Naive thymus-derived CD4-positive, alpha-beta T cell (primary cell): ENCODE measurements at regions of chr2 and their contacts with region 1.

Region 1: GRCh38 chr2:160306985-160307384 is 106.9 kb upstream of the ITGB6 start:
- DNase-seq: no peak
- ATAC-seq: no peak
- H3K4me3 ChIP-seq: no peak overlapping the region
- H3K4me3 Mint-ChIP-seq: no peak overlapping the region
- H3K27ac ChIP-seq: no peak overlapping the region
- H3K27ac Mint-ChIP-seq: no peak overlapping the region
- H3K4me1 ChIP-seq: no peaks in the 10 kb centered on the region
- H3K4me1 Mint-ChIP-seq: peaks cover 0 to 56% (median 24%) of the 10 kb centered on the region in 7 donors
- H3K27me3 ChIP-seq: no peaks in the 10 kb centered on the region
- H3K27me3 Mint-ChIP-seq: no peaks in the 10 kb centered on the region

Region 2: GRCh38 chr2:160294339-160294803 is 12.6 kb before region 1 on chr2:
- CTCF ChIA-PET with region 1: interaction called, 3 read pairs
- POLR2A ChIA-PET with region 1: interaction called, 7 read pairs
- intact Hi-C with region 1: loop called in 1 of 2 experiments (anchors 2 kb)
- DNase-seq: peak in 1 of 9 donors; percentile 28
- ATAC-seq: peak; percentile 74
- H3K4me3 ChIP-seq: no peak overlapping the region
- H3K4me3 Mint-ChIP-seq: no peak overlapping the region
- H3K27ac ChIP-seq: no peak overlapping the region
- H3K27ac Mint-ChIP-seq: peak overlapping the region in 4 of 9 donors; percentile 15 to 49 (median 33)
- H3K4me1 ChIP-seq: peaks cover 0 to 32% of the 10 kb centered on the region in 2 donors
- H3K4me1 Mint-ChIP-seq: peaks cover 37 to 86% (median 66%) of the 10 kb centered on the region in 7 donors
- H3K27me3 ChIP-seq: no peaks in the 10 kb centered on the region
- H3K27me3 Mint-ChIP-seq: no peaks in the 10 kb centered on the region

Region 3: GRCh38 chr2:160317181-160318099 is 10.5 kb after region 1 on chr2:
- CTCF ChIA-PET with region 1: interaction called, 5 read pairs
- POLR2A ChIA-PET with region 1: no interaction called
- intact Hi-C with region 1: loop called in 1 of 2 experiments (anchors 2 kb)
- DNase-seq: no peak
- ATAC-seq: no peak
- H3K4me3 ChIP-seq: no peak overlapping the region
- H3K4me3 Mint-ChIP-seq: peak overlapping the region in 1 of 10 donors; percentile 20
- H3K27ac ChIP-seq: no peak overlapping the region
- H3K27ac Mint-ChIP-seq: peak overlapping the region in 3 of 9 donors; percentile 45 to 74 (median 46)
- H3K4me1 ChIP-seq: peaks cover 5 to 17% of the 10 kb centered on the region in 2 donors
- H3K4me1 Mint-ChIP-seq: peaks cover 15 to 94% (median 75%) of the 10 kb centered on the region in 7 donors
- H3K27me3 ChIP-seq: no peaks in the 10 kb centered on the region
- H3K27me3 Mint-ChIP-seq: no peaks in the 10 kb centered on the region